ENCODE measurements at regions of chr12 and their contacts with region 1.

Region 1: DNA sequence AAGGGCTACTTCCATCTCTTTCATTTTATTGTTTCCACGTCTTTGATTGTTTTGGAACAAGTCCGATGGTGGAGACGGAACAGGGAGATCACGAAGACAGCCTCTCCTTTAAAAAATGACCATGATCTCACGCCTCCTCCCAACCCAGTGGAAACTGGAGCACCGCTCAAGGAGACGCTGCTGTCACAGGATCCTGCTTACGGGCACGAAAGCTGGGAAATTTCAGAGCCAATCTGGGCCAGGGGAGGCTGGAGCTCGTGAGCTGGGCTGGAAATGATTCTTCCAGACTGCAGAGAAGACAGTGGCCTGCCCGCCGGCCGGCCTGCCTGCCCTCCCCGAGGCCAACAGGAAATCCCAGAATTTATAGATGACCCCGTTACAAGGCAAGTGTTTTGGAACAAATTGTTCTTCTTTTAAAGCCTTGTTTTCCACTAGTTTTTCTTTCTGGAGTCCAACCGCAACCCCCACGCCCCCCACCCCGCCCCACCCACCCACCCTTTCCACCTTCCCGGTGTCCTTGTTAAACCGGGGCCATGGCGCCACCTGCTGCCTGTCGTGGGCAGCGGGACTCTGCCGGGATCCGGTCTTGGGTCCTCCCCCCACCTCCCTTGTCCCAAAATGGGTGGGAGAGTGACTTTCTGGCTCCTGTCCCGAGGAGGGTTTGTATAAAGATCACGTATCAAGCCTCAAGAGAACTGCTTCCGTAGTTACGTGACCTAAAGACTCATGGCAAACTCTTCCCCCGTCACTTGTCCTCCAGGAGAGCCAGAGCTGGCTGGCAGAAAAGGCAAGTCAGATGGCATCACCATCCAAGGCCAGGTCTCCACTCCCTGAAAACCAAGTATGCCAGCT is 40.3 kb downstream of the MAP1LC3B2 start:
- DNase-seq: peak; percentile 67 to 74
- ATAC-seq: peak; percentile 79 to 83
- H3K4me3 ChIP-seq: peak overlapping the region; percentile 46 to 66 (median 49)
- H3K27ac ChIP-seq: peak overlapping the region; percentile 68 to 82 (median 78)
- H3K4me1 ChIP-seq: peaks cover 15 to 20% of the 10 kb centered on the region in 2 donors
- H3K27me3 ChIP-seq: peaks cover 5 to 6% (median 6%) of the 10 kb centered on the region in 3 donors
- CTCF ChIP-seq: peak; percentile 27 to 84 (median 58)
- POLR2A ChIP-seq: peak; percentile 11 to 62

Region 2: DNA sequence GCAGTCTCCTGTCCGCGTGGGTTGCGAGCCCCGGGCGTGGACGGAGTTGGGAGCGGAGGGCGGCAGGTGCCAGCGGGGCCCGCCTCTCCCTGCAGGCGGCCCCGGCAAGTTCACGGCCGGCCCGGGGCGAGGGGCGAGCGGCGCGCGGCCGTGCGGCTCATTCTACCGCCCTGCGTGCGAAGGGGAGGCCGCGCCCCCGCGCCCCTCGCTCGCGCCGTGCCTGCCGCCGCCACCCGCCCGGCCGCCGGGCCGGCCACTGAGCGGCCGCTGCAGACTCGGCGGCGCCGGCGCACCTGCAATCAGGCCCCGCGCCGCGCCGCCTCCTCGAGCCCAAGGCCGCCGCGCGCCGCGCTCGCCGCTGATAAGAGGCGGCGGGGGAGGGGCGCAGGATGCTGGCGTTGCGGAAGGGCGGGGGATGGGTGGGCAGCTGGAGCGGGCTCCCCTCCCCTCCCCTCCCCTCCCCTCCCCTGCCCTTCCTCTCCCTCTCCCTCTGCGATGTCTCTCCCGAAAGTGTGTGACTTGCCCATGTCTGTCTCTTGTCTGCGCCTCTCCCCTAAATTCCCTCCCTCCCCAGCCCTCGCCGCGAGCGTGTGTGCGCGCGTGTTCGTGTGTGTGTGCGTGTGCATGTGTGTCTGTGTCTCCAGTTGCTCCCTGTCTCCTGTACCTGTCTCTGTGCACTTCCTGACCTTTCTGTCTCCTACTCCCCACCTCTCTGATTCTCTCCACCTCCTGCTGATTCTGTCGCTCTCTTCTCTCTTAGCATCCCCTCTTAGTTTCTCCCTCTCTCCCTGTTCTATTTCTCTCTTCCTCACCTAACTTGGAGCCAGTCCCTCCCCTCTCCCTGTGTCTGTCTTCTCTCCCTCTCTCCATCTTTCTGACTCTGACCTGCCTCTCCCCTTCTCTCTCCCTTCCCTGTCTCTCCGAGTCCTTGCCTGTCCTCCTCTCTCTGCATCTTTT is 1147.5 kb before region 1 on chr12:
- in situ Hi-C with region 1: no loop called
- intact Hi-C with region 1: no loop called
- DNase-seq: no peak
- ATAC-seq: peak in 1 of 2 donors; percentile 40
- H3K4me3 ChIP-seq: peak overlapping the region; percentile 8 to 42 (median 36)
- H3K27ac ChIP-seq: peak overlapping the region in 2 of 4 donors; percentile 34 to 42
- H3K4me1 ChIP-seq: no peaks in the 10 kb centered on the region
- H3K27me3 ChIP-seq: no peaks in the 10 kb centered on the region
- CTCF ChIP-seq: no peak
- POLR2A ChIP-seq: no peak

Region 3: GRCh38 chr12:115998119-115998633 is 601.3 kb before region 1 on chr12:
- in situ Hi-C with region 1: loop called (anchors 5 to 25 kb)
- intact Hi-C with region 1: loop called (anchors 1 kb)
- DNase-seq: no peak
- ATAC-seq: peak; percentile 51 to 62
- H3K4me3 ChIP-seq: no peak overlapping the region
- H3K27ac ChIP-seq: peak overlapping the region; percentile 37 to 51 (median 44)
- H3K4me1 ChIP-seq: peaks cover 24 to 25% of the 10 kb centered on the region in 2 donors
- H3K27me3 ChIP-seq: no peaks in the 10 kb centered on the region
- CTCF ChIP-seq: peak; percentile 70 to 85 (median 78)
- POLR2A ChIP-seq: no peak

Region 4: GRCh38 chr12:116236148-116236731 is 363.3 kb before region 1 on chr12:
- in situ Hi-C with region 1: no loop called
- intact Hi-C with region 1: loop called (anchors 2 kb)
- DNase-seq: peak; percentile 43 to 56
- ATAC-seq: peak; percentile 80 to 82
- H3K4me3 ChIP-seq: no peak overlapping the region
- H3K27ac ChIP-seq: peak overlapping the region; percentile 4 to 73 (median 44)
- H3K4me1 ChIP-seq: peaks cover 51 to 64% of the 10 kb centered on the region in 2 donors
- H3K27me3 ChIP-seq: no peaks in the 10 kb centered on the region
- CTCF ChIP-seq: peak; percentile 74 to 91 (median 82)
- POLR2A ChIP-seq: no peak

Region 5: GRCh38 chr12:116277393-116278278 is 321.9 kb before region 1 on chr12 and contains the start of gene MED13L:
- in situ Hi-C with region 1: loop called in 3 of 4 experiments (anchors 5 to 25 kb)
- intact Hi-C with region 1: loop called (anchors 1 kb)
- DNase-seq: peak; percentile 80 to 88
- ATAC-seq: peak; percentile 85 to 86
- H3K4me3 ChIP-seq: peak within 1 kb of the TSS; percentile 69 to 95 (median 88)
- H3K27ac ChIP-seq: peak within 1 kb of the TSS; percentile 87 to 99 (median 96)
- H3K4me1 ChIP-seq: peaks cover 28 to 37% of the 10 kb centered on the region in 2 donors
- H3K27me3 ChIP-seq: no peaks in the 10 kb centered on the region
- CTCF ChIP-seq: peak in 3 of 5 experiments; percentile 30 to 73 (median 52)
- POLR2A ChIP-seq: peak; percentile 83 to 86
- total RNA-seq, gene MED13L: 59.5 to 92.6 (median 74.1) TPM

Region 6: DNA sequence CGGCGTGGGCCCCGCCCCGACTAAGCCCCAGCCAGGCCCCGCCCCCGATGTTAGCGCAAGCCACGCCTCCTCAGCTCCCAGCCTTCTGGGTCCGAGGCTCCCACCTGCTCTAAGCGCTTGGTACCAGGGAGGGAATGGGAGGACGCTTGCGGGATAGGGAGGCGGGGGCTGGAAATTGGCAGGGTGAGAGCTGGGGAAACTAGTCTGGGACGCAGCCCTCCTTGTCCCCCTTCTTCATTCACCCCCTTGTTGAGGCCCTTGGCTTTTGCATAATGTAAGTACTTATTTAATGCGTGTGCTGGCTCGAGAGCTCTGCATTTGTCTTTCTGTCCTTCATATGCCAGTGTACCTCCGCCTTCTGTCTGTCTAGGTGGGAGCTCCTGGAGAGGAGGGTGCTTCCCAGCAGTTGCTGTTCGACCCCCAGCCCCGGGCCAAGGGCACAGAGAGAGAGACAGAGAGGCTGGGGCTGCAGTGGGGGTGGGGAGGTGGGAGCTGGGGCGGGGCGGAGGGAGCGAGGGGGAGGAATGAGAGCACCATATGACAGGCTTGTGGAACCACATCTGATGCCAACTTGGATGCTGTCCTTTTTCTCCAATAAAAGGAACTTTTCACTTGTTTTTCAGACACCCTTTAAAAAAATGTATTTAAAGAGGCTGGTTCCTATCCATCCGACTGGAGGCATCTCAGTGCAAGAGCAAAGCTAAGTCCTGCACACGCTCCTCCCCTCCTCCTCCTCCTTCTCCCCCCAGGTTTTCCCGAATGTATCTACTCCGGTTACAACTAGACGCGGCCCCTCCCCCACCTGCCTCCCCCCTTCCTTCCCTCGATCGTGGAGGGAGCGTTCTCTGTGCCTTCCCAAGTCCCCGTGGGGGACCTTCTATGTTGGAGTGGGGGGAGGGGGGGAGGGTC is 65.9 kb before region 1 on chr12:
- in situ Hi-C with region 1: no loop called
- intact Hi-C with region 1: loop called (anchors 5 kb)
- DNase-seq: peak; percentile 31 to 58
- ATAC-seq: peak; percentile 77 to 80
- H3K4me3 ChIP-seq: peak overlapping the region; percentile 50 to 88 (median 74)
- H3K27ac ChIP-seq: peak overlapping the region; percentile 75 to 81 (median 80)
- H3K4me1 ChIP-seq: peaks cover 5 to 11% of the 10 kb centered on the region in 2 donors
- H3K27me3 ChIP-seq: no peaks in the 10 kb centered on the region
- CTCF ChIP-seq: no peak
- POLR2A ChIP-seq: peak in 1 of 2 donors; percentile 36

Measured in gastrocnemius medialis (tissue), 4 donors.